Tibial artery (tissue), 4 donors: ENCODE measurements at regions of chr10 and their contacts with region 1.

Region 1: GRCh38 chr10:12214763-12215218 is 18.8 kb downstream of the CDC123 start:
- DNase-seq: no peak
- H3K4me3 ChIP-seq: peak overlapping the region; percentile 35 to 36
- H3K27ac ChIP-seq: peak overlapping the region; percentile 48 to 63
- H3K4me1 ChIP-seq: peaks cover 0 to 10% (median 3%) of the 10 kb centered on the region in 4 donors
- H3K27me3 ChIP-seq: no peaks in the 10 kb centered on the region
- CTCF ChIP-seq: peak; percentile 73 to 81

Region 2: GRCh38 chr10:13099666-13100348 is 885.0 kb after region 1 on chr10 and contains the start of gene OPTN:
- intact Hi-C with region 1: loop called (anchors 5 kb)
- DNase-seq: peak; percentile 80 to 92
- H3K4me3 ChIP-seq: peak within 1 kb of the TSS; percentile 85 to 97
- H3K27ac ChIP-seq: peak within 1 kb of the TSS; percentile 99
- H3K4me1 ChIP-seq: peaks cover 0 to 33% (median 21%) of the 10 kb centered on the region in 4 donors
- H3K27me3 ChIP-seq: no peaks in the 10 kb centered on the region
- CTCF ChIP-seq: peak; percentile 74 to 84